ENCODE measurements at regions of chr4 and their contacts with region 1.

Region 1: GRCh38 chr4:119628308-119629141 is at the start of gene PDE5A:
- DNase-seq: peak; percentile 93
- H3K4me3 Mint-ChIP-seq: peak within 1 kb of the TSS; percentile 89
- H3K27ac Mint-ChIP-seq: peak within 1 kb of the TSS; percentile 55
- H3K4me1 Mint-ChIP-seq: peaks cover 20% of the 10 kb centered on the region
- H3K27me3 Mint-ChIP-seq: peaks cover 63% of the 10 kb centered on the region
- total RNA-seq, gene PDE5A: 0.09 TPM in 1 of 2 replicates, not detected in the other

Region 2: DNA sequence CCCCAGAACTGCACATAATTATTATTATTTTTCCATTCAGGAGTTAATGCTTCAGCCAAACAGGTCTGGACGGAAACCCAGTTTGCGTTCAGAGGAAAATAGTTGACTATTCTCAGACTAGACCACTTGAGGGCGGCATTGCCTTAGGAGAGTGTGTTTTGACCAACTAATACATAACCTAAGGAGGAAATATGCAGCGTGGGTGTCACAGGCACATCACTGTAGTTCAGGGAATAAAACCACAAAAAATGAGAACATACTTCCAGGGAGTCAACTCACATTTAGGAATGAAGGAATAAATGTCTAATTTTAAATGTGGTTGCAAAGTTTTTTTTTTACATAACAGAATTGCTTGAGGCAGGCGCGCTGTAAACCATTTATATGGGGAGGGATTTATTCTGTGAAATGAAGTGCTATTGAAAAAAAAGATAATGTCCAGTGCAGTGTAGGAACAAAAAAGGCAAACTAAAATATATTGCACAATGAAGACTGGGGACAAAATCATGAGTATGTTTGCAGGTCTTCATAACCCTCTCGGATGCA is 646.6 kb before region 1 on chr4:
- intact Hi-C with region 1: loop called (anchors 2 kb)
- DNase-seq: peak; percentile 84
- H3K4me3 Mint-ChIP-seq: no peak overlapping the region
- H3K27ac Mint-ChIP-seq: no peak overlapping the region
- H3K4me1 Mint-ChIP-seq: no peaks in the 10 kb centered on the region
- H3K27me3 Mint-ChIP-seq: peaks cover 14% of the 10 kb centered on the region

Region 3: GRCh38 chr4:119314356-119314755 is 314.2 kb before region 1 on chr4:
- intact Hi-C with region 1: loop called (anchors 1 kb)
- DNase-seq: peak; percentile 79
- H3K4me3 Mint-ChIP-seq: no peak overlapping the region
- H3K27ac Mint-ChIP-seq: no peak overlapping the region
- H3K4me1 Mint-ChIP-seq: no peaks in the 10 kb centered on the region
- H3K27me3 Mint-ChIP-seq: peaks cover 13% of the 10 kb centered on the region

Region 4: GRCh38 chr4:119559044-119559647 is 69.4 kb before region 1 on chr4:
- intact Hi-C with region 1: loop called (anchors 5 kb)
- DNase-seq: no peak
- H3K4me3 Mint-ChIP-seq: no peak overlapping the region
- H3K27ac Mint-ChIP-seq: no peak overlapping the region
- H3K4me1 Mint-ChIP-seq: no peaks in the 10 kb centered on the region
- H3K27me3 Mint-ChIP-seq: no peaks in the 10 kb centered on the region

Region 5: GRCh38 chr4:119785963-119786362 is 157.4 kb after region 1 on chr4:
- intact Hi-C with region 1: loop called (anchors 10 kb)
- DNase-seq: no peak
- H3K4me3 Mint-ChIP-seq: no peak overlapping the region
- H3K27ac Mint-ChIP-seq: no peak overlapping the region
- H3K4me1 Mint-ChIP-seq: no peaks in the 10 kb centered on the region
- H3K27me3 Mint-ChIP-seq: peaks cover 2% of the 10 kb centered on the region

Region 6: DNA sequence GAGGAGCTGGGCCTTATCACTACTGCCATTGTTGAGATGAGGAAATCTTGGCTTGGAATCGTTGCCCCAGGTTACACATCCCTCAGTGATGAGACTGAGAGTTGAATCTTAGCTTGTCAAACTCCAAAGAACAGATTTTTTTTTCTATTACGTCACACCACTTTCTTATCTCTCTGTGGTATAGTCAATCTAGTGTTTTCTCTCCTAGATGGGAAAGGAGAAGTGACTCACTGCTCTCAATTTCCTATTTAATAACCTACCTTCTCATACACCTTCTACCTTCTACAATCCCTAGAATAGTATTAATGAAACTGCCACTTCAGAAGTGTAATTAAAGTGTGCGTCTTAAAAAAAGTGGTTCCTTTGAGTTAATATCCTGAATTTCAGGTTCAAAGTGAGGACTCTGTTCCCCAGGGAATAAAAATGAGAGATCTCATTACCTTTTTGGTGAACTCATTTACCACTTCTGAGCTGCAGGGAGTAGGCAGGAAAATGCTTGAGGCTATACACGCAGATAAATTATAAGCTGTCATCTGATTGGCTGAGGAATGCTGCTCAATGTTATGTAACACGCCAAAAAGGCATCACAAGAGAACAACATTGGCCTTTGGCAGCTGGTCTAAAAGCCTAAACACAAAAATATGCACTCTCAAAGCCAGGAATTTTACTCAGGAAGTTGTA is 378.8 kb after region 1 on chr4:
- intact Hi-C with region 1: no loop called
- DNase-seq: no peak
- H3K4me3 Mint-ChIP-seq: no peak overlapping the region
- H3K27ac Mint-ChIP-seq: no peak overlapping the region
- H3K4me1 Mint-ChIP-seq: no peaks in the 10 kb centered on the region
- H3K27me3 Mint-ChIP-seq: no peaks in the 10 kb centered on the region

Region 7: GRCh38 chr4:120049732-120050494 is 421.4 kb after region 1 on chr4:
- intact Hi-C with region 1: loop called (anchors 1 kb)
- DNase-seq: peak; percentile 93
- H3K4me3 Mint-ChIP-seq: peak overlapping the region; percentile 31
- H3K27ac Mint-ChIP-seq: peak overlapping the region; percentile 26
- H3K4me1 Mint-ChIP-seq: peaks cover 2% of the 10 kb centered on the region
- H3K27me3 Mint-ChIP-seq: no peaks in the 10 kb centered on the region